Motor neuron (in vitro differentiated cells): ENCODE measurements at regions of chr3 and their contacts with region 1.

Region 1: DNA sequence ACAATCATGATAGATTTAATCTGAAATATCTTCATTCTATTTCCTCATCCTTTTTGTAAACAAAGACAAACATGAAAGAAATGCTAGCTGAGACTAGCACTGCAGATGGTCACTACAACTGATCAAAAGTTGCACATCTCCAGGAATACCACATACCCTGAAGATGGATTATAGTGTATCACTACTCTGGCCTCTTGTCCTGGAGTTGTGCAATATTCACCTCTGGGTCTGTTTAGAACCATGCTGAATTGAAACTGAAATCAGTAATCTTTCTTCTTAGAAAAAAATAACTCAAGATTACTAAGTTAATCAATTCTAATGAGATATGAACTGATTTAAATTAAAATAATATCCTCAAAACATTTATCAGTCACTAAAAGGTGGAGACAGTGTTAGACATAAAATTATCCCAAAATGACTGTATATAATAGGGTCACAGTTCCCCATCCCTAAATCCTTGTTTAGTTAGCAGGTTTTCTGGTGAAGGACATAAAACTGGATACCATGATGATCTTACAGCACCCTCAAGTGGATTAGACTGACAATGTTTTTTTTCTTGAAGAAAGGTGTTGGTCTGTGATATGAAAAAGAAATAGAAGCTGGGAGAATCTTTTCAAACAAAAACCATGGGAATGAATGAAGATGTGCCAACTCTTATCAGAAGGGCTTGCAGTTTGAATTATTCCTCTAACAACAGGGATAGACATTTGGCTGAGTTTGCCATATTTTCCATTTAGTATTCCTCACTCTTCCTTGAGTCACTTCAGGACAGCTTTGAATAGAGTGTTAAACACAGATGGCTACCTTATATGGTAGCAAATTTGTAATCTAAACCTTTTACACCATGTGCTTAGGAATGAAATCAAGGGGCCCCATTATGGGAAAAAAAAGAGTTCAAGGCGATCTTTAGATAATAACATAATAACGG is 7.1 kb upstream of the TTC14 start:
- ATAC-seq: peak; percentile 47 to 86 (median 62)
- H3K4me3 ChIP-seq: no peak overlapping the region
- H3K27ac ChIP-seq: no peak overlapping the region
- H3K4me1 ChIP-seq: no peaks in the 10 kb centered on the region

Region 2: DNA sequence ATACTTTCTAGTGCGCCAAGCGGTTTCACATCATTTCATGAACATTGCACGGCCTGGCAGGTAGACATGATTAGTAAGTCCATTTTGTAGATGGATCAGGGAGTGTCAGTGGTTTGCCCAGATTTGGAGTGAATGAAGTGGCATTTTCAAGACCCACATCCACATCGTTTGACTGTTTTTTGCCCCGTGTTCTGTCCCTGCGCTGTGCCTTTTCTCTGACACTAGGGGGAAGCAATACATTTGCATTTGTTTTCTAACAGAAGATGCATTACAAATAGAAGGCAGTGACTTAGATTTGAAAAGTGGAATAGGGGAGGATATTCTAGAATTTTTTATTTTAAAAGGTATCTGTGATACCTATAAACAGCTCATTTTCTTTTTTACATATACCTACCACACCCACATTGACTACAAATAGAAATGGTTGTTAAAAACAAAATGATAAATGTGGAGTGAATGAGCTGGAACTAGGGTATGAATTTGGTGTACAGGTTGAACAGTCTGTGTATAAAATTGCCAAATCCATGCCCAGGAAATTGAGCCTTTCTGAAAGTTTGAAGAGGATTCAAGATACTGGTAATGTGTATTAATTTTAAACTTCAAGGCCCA is 844.1 kb before region 1 on chr3:
- in situ Hi-C with region 1: loop called in 1 of 9 experiments (anchors 25 kb)
- ATAC-seq: peak in 3 of 8 experiments; percentile 38 to 62 (median 44)
- H3K4me3 ChIP-seq: no peak overlapping the region
- H3K27ac ChIP-seq: no peak overlapping the region
- H3K4me1 ChIP-seq: no peaks in the 10 kb centered on the region

Region 3: GRCh38 chr3:179811321-179812095 is 783.4 kb before region 1 on chr3:
- in situ Hi-C with region 1: loop called in 4 of 9 experiments (anchors 25 kb)
- ATAC-seq: peak; percentile 42 to 98 (median 68)
- H3K4me3 ChIP-seq: no peak overlapping the region
- H3K27ac ChIP-seq: no peak overlapping the region
- H3K4me1 ChIP-seq: no peaks in the 10 kb centered on the region

Region 4: GRCh38 chr3:179921500-179921899 is 673.4 kb before region 1 on chr3:
- in situ Hi-C with region 1: loop called in 3 of 9 experiments (anchors 10 to 25 kb)
- ATAC-seq: peak; percentile 71 to 100 (median 90)
- H3K4me3 ChIP-seq: no peak overlapping the region
- H3K27ac ChIP-seq: no peak overlapping the region
- H3K4me1 ChIP-seq: peaks cover 2 to 9% of the 10 kb centered on the region in 2 donors

Region 5: GRCh38 chr3:179929091-179929529 is 665.8 kb before region 1 on chr3:
- in situ Hi-C with region 1: loop called in 3 of 9 experiments (anchors 10 to 25 kb)
- ATAC-seq: peak in 4 of 8 experiments; percentile 11 to 46 (median 40)
- H3K4me3 ChIP-seq: no peak overlapping the region
- H3K27ac ChIP-seq: no peak overlapping the region
- H3K4me1 ChIP-seq: no peaks in the 10 kb centered on the region

Region 6: GRCh38 chr3:180036671-180037455 is 558.0 kb before region 1 on chr3 and contains the start of gene PEX5L:
- in situ Hi-C with region 1: loop called in 1 of 9 experiments (anchors 25 kb)
- ATAC-seq: peak; percentile 91 to 96 (median 94)
- H3K4me3 ChIP-seq: peak within 1 kb of the TSS; percentile 50 to 83 (median 56)
- H3K27ac ChIP-seq: no peak within 1 kb of the TSS
- H3K4me1 ChIP-seq: peaks cover 0 to 9% of the 10 kb centered on the region in 2 donors
- total RNA-seq, gene PEX5L: 3.6 to 76.9 (median 9.1) TPM

Region 7: GRCh38 chr3:180762875-180763274 is 168.0 kb after region 1 on chr3:
- in situ Hi-C with region 1: no loop called
- ATAC-seq: peak in 2 of 8 experiments; percentile 38 to 45
- H3K4me3 ChIP-seq: no peak overlapping the region
- H3K27ac ChIP-seq: no peak overlapping the region
- H3K4me1 ChIP-seq: no peaks in the 10 kb centered on the region